ENCODE measurements at regions of chr7 and their contacts with region 1.

Region 1: GRCh38 chr7:154927624-154928143 is 75.2 kb downstream of the PAXIP1 start:
- DNase-seq: peak; percentile 69 to 90
- H3K4me3 ChIP-seq: peak overlapping the region; percentile 53 to 64
- H3K27ac ChIP-seq: peak overlapping the region; percentile 86 to 95
- H3K4me1 ChIP-seq: peaks cover 0 to 4% of the 10 kb centered on the region in 2 donors
- H3K27me3 ChIP-seq: no peaks in the 10 kb centered on the region
- CTCF ChIP-seq: peak; percentile 64 to 79 (median 71)
- POLR2A ChIP-seq: no peak

Region 2: GRCh38 chr7:154676422-154677073 is 251.1 kb before region 1 on chr7:
- intact Hi-C with region 1: no loop called
- DNase-seq: no peak
- H3K4me3 ChIP-seq: no peak overlapping the region
- H3K27ac ChIP-seq: no peak overlapping the region
- H3K4me1 ChIP-seq: no peaks in the 10 kb centered on the region
- H3K27me3 ChIP-seq: no peaks in the 10 kb centered on the region
- CTCF ChIP-seq: no peak
- POLR2A ChIP-seq: no peak

Region 3: GRCh38 chr7:155298834-155299534 is 371.3 kb after region 1 on chr7:
- intact Hi-C with region 1: loop called (anchors 5 kb)
- DNase-seq: peak; percentile 81 to 89
- H3K4me3 ChIP-seq: peak overlapping the region; percentile 49 to 99
- H3K27ac ChIP-seq: peak overlapping the region; percentile 92
- H3K4me1 ChIP-seq: no peaks in the 10 kb centered on the region
- H3K27me3 ChIP-seq: no peaks in the 10 kb centered on the region
- CTCF ChIP-seq: no peak
- POLR2A ChIP-seq: peak; percentile 45 to 76

Measured in uterus (tissue), 4 donors.